BJ (cell line): ENCODE measurements at regions of chr18 and their contacts with region 1.

Region 1: DNA sequence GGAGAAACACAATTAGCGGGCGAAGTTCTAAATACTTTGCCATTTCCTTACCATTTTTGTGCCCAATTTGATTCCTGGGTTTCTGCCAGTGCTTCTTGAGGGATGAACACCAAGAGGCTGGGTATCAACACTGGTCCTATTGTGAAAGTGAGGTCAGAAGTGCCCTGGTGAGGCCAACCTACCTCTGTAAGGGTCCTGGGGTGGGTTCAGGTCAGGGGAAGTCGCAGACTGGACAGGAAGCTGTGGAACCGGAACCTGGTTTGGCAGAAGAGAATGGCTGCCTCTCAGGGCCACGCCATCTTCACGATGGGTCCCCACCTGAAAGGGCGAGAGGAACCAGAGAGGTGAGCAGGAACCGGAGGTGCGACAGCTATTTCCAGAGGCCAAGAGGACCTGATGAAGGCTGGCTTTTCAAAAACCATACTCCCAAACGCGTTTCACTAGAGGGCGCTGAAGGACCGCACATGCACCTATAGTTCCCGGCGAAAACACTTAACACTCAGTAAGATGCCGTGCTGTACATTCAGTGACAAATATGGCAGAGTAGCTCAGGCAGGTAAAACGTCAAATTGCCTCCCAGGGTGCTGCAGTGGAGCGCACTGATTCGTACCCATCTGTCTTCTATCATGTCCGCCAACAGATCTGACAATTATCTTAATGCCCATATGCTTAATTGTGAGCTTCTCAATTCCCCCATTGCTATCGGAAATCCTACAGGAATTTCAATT is 275.3 kb upstream of the CCDC68 start:
- DNase-seq: no peak
- H3K4me3 ChIP-seq: no peak overlapping the region
- H3K27me3 ChIP-seq: no peaks in the 10 kb centered on the region
- CTCF ChIP-seq: peak; percentile 86

Region 2: GRCh38 chr18:55224086-55224625 is 10.4 kb before region 1 on chr18:
- CTCF ChIA-PET with region 1: interaction called, 14 read pairs
- POLR2A ChIA-PET with region 1: no interaction called
- DNase-seq: no peak
- H3K4me3 ChIP-seq: no peak overlapping the region
- H3K27me3 ChIP-seq: no peaks in the 10 kb centered on the region
- CTCF ChIP-seq: no peak

Region 3: GRCh38 chr18:55275039-55275901 is 40.7 kb after region 1 on chr18:
- CTCF ChIA-PET with region 1: interaction called, 16 read pairs
- POLR2A ChIA-PET with region 1: no interaction called
- DNase-seq: no peak
- H3K4me3 ChIP-seq: no peak overlapping the region
- H3K27me3 ChIP-seq: no peaks in the 10 kb centered on the region
- CTCF ChIP-seq: no peak; the same call in none of the 2 replicates

Region 4: GRCh38 chr18:55322178-55322735 is 87.7 kb after region 1 on chr18:
- CTCF ChIA-PET with region 1: interaction called, 13 read pairs
- POLR2A ChIA-PET with region 1: no interaction called
- DNase-seq: peak; percentile 74
- H3K4me3 ChIP-seq: peak overlapping the region; percentile 61
- H3K27me3 ChIP-seq: no peaks in the 10 kb centered on the region
- CTCF ChIP-seq: peak; percentile 15; the same call in 1 of the 2 replicates

Region 5: GRCh38 chr18:55415258-55415871 is 180.8 kb after region 1 on chr18:
- CTCF ChIA-PET with region 1: interaction called, 14 read pairs
- POLR2A ChIA-PET with region 1: no interaction called
- DNase-seq: no peak
- H3K4me3 ChIP-seq: no peak overlapping the region
- H3K27me3 ChIP-seq: no peaks in the 10 kb centered on the region
- CTCF ChIP-seq: peak; percentile 90

Region 6: DNA sequence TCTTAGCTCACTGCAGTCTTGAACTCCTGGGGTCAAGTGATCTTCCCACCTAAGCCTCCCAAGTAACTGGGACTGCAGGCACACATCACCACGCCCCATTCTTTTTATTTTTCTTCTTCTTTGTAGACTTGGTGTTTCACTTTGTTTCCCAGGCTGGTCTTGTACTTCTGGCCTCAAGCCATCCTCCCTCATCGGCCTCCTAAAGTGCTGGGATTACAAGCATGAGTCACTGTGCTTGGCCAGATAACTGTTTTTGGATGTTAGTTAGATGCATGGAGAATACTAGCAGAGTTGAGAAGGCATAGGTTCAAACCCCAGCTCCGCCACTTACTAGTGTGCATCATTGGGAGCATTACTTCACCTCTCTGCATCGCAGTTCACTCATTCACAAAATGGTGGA is 1315.6 kb after region 1 on chr18:
- CTCF ChIA-PET with region 1: no interaction called
- POLR2A ChIA-PET with region 1: no interaction called
- DNase-seq: no peak
- H3K4me3 ChIP-seq: no peak overlapping the region
- H3K27me3 ChIP-seq: no peaks in the 10 kb centered on the region
- CTCF ChIP-seq: no peak